Activated CD4-positive, alpha-beta memory T cell treated with anti-CD3 and anti-CD28 coated beads for 36 hours (primary cell): ENCODE measurements at regions of chr12 and their contacts with region 1.

Region 1: DNA sequence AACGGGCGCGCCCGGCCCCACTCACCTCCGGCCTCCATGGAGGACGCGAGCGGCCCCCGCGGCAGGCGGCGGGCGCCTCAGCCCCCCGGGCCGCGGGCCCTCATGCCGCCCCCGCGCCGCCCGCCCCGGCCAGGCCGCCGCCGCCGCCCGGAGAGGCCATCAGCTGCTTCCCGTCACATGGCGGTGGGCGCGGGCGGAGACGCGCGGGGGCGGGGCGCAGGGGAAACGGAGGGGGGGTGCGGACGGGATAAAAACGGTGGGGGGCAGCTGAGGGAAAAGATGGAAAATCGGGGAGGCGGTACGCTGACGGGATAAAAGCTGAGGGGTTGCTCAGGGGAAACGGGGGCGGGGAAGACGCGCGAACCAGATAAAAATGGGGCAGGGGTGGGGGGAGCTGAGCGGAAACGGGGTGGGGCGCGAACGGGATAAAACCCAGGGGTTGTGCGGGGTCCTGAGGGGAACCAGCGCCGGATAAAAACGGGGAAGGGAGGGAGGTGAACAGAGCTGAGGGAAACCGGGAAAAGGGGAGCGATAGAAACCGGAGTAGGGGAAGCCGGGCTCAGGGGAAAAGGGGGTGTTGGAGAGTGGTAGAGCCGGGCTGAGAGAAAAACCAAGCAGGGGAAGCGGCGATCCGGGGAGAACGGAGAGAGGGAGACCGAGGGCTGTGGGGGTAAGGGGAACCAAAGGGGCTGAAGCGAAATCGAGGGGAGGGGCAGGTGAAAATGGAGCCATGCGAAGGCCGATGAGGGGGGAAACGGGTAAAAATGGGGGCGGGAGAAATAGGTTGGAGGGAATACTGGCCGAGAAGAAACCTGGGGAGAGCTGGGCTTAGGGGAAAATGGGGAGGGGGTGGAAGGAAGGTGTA is at the start of gene WSB2:
- DNase-seq: peak; percentile 73
- H3K4me3 Mint-ChIP-seq: peak within 1 kb of the TSS; percentile 81
- H3K27ac Mint-ChIP-seq: peak within 1 kb of the TSS; percentile 92
- H3K4me1 Mint-ChIP-seq: peaks cover 48% of the 10 kb centered on the region
- H3K27me3 Mint-ChIP-seq: no peaks in the 10 kb centered on the region
- total RNA-seq, gene WSB2: 93.2 to 102 TPM

Region 2: DNA sequence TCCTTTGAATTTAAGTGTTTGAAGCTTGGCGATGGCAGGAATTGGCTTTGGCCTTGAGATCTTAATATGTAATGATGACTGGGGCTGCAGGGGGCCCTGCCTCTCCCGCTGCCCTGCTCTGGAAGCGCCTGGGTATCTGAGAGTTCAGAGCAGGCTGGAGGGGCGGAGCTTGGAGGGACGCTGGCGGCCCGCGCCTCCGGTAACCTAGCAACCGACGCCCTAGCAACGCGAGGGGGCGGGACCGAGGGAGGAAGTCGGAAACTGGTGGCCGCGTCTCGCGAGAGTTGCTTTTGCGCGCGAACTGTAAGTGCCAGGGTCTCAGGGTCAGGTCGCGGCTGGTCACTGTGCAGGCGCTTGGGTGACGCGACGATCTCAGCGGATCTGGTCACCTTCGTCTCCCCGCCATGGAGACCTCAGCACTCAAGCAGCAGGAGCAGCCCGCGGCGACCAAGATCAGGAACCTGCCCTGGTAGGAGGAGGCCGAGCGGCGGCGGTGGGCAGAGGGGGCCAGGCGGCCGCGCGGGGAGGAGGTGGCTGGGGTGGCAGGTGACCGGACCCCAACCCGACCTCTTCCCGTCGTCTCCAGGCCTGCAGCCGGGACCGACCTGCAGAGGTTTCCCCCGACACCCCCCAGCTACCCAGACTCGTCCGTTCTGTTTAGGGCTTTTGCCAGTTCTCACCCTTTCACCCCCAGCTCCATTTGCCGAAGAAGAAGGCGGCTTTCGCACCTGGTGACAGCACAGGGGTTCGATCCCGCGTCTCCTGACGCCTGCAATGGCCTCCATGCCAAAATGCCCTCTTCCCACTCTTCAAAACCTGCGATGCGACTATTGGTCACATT is 44.6 kb before region 1 on chr12 and contains the start of gene RFC5:
- CTCF ChIA-PET with region 1: interaction called, 6 read pairs
- POLR2A ChIA-PET with region 1: interaction called, 6 read pairs
- intact Hi-C with region 1: loop called (anchors 1 kb)
- DNase-seq: peak; percentile 98
- H3K4me3 Mint-ChIP-seq: peak within 1 kb of the TSS; percentile 94
- H3K27ac Mint-ChIP-seq: peak within 1 kb of the TSS; percentile 82
- H3K4me1 Mint-ChIP-seq: peaks cover 28% of the 10 kb centered on the region
- H3K27me3 Mint-ChIP-seq: peaks cover 2% of the 10 kb centered on the region
- total RNA-seq, gene RFC5: 65.8 to 70.8 TPM

Region 3: DNA sequence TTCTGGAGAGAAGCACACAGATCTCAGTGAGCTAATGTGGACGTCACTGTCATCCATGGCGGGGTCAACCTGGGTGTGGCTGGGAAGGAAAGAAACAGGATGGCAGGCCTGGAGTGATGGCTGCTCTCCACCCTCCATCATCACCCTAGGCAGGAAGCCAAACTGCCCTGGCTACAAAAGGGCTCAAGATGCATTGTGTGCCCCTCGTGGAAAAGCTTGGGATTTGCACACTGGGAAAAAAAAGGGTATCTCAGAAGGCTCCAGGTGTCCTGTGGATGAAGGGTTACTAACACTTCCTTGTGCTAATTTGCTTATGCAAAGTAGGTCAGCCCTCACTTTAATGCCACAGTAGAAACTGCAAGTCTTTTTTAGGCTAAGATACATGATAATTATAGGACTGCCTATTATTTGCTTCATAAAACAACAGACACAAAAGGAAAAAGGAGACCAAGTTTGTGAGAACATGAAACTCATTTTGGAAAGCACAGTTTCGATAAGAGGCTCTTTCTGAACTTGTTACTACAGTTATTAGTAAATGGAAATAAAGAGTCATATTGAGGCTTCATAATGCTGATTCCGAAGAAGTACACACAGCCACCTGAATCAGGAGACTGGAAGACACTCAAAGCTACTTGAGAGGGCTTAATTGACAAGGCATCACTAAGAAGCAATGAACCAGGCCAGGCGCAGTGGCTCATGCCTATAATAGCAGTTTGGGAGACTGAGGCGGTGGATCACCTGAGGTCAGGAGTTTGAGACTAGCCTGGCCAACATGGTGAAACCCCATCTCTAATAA is 25.8 kb before region 1 on chr12:
- CTCF ChIA-PET with region 1: interaction called, 20 read pairs
- POLR2A ChIA-PET with region 1: interaction called, 48 read pairs
- intact Hi-C with region 1: loop called (anchors 1 kb)
- DNase-seq: peak; percentile 55
- H3K4me3 Mint-ChIP-seq: peak overlapping the region; percentile 31
- H3K27ac Mint-ChIP-seq: peak overlapping the region; percentile 94
- H3K4me1 Mint-ChIP-seq: peaks cover 57% of the 10 kb centered on the region
- H3K27me3 Mint-ChIP-seq: no peaks in the 10 kb centered on the region

Region 4: GRCh38 chr12:118044075-118044474 is 17.2 kb before region 1 on chr12:
- CTCF ChIA-PET with region 1: interaction called, 29 read pairs
- POLR2A ChIA-PET with region 1: interaction called, 41 read pairs
- intact Hi-C with region 1: loop called (anchors 2 kb)
- DNase-seq: peak; percentile 58
- H3K4me3 Mint-ChIP-seq: peak overlapping the region; percentile 46
- H3K27ac Mint-ChIP-seq: peak overlapping the region; percentile 97
- H3K4me1 Mint-ChIP-seq: peaks cover 59% of the 10 kb centered on the region
- H3K27me3 Mint-ChIP-seq: no peaks in the 10 kb centered on the region

Region 5: GRCh38 chr12:118120579-118121363 is 59.5 kb after region 1 on chr12:
- CTCF ChIA-PET with region 1: interaction called, 3 read pairs
- POLR2A ChIA-PET with region 1: interaction called, 4 read pairs
- intact Hi-C with region 1: loop called (anchors 5 kb)
- DNase-seq: peak; percentile 81
- H3K4me3 Mint-ChIP-seq: no peak overlapping the region
- H3K27ac Mint-ChIP-seq: peak overlapping the region; percentile 20
- H3K4me1 Mint-ChIP-seq: peaks cover 11% of the 10 kb centered on the region
- H3K27me3 Mint-ChIP-seq: no peaks in the 10 kb centered on the region

Region 6: DNA sequence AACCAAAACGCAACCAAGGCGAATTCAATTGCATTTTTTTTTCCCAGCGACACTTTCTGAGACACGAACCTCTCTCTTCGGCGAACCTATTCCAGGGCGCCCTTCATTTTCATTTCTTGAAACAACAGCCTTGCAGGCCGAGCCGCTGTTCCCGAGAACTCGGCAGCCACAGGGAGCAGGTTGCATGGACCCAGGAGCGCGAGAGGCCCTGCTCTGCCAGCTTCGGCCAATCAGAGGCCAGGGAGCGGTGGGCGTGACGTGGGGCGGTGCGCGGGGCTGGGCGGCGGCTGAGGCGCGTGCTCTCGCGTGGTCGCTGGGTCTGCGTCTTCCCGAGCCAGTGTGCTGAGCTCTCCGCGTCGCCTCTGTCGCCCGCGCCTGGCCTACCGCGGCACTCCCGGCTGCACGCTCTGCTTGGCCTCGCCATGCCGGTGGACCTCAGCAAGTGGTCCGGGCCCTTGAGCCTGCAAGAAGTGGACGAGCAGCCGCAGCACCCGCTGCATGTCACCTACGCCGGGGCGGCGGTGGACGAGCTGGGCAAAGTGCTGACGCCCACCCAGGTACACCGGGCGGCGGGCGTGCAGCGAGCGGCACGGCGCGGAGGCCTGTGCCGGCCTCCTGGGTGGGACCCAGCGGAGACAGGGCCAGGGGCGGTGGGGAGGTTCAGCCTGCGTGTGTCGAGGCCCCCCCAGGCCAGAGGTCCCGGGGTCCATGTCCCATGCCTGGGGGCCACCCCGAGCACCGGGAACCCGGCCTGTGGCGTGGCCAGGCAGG is 74.7 kb after region 1 on chr12 and contains the start of gene PEBP1:
- CTCF ChIA-PET with region 1: interaction called, 4 read pairs
- POLR2A ChIA-PET with region 1: interaction called, 11 read pairs
- intact Hi-C with region 1: loop called (anchors 5 kb)
- DNase-seq: peak; percentile 97
- H3K4me3 Mint-ChIP-seq: peak within 1 kb of the TSS; percentile 91
- H3K27ac Mint-ChIP-seq: peak within 1 kb of the TSS; percentile 74
- H3K4me1 Mint-ChIP-seq: peaks cover 27% of the 10 kb centered on the region
- H3K27me3 Mint-ChIP-seq: no peaks in the 10 kb centered on the region
- total RNA-seq, gene PEBP1: 128 to 132 TPM